ENCODE measurements at regions of chr17 and their contacts with region 1.

Region 1: DNA sequence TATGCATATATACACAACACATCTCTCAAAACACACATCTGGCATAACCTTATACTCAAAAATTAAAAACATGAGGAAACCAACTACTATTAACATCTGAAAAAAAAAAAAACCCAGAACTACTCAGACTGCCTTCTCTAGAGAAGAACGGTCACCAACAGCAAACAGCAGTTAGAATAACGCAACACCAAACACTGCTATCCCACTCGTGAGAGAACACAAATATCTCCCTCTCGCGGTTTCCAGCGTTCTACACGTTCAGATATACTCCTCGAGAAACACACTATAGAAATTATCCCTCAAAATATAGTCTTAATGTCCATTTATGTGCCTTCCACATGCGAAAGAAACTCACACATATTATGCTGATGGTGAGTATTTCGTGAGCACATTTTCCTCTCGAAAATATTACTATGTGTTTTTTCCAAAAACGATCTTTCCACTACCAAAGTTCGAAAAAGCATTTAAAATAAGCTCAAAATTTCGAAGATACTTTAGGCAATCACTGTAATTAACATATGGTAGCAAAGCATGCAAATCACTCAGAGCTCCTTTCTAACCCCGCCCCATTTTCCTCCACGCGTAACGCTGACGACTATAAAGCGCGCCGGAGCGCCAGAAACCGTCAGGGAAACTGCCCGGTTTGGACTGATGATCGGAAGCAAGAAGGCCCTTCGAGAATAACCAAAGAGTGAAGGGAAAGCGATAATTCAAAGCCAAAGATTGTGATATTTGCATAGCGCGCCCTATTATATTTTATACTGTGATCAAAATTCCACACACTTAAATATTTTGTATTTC is 60.1 kb downstream of the TEX14 start:
- DNase-seq: peak; percentile 100
- ATAC-seq: peak; percentile 95
- H3K4me3 ChIP-seq: peak overlapping the region; percentile 64
- H3K27ac ChIP-seq: peak overlapping the region; percentile 78
- H3K4me1 ChIP-seq: peaks cover 13% of the 10 kb centered on the region
- H3K27me3 ChIP-seq: no peaks in the 10 kb centered on the region
- CTCF ChIP-seq: peak; percentile 30; the same call in 1 of the 2 replicates

Region 2: DNA sequence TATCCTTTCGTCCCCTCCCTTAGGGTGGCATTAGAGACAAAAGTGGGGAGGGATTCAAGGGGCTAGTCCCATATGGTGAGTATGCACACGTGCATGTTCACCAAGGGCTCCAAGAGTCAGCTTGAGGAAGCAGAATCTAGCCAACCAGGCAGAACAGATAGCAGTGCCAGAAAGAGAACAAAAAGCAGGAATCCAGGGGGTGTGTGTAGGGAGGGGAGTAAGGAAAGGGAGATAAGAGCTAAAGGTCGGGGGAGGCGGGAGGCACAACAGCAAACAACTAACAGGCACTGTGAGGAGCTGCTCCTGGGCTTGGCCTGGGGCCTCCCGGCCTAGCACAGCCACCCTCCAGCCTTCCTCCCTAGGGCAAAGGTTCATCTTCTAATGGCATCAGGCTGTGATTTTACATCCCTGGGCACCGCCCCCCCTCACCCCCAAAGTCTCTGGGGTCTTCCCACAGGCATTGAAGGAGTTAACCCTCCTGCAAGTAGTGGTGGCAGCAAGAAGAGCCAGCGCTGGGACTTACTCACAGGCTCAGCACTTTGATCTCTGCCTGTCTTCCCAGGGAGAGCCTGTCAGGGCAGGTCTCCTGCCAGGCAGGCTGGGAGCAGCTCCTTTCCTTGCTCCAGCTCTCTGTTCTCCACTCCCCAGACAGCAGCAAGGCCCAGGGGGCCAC is 267.3 kb before region 1 on chr17:
- CTCF ChIA-PET with region 1: no interaction called
- POLR2A ChIA-PET with region 1: no interaction called
- intact Hi-C with region 1: no loop called
- DNase-seq: no peak
- ATAC-seq: no peak
- H3K4me3 ChIP-seq: no peak overlapping the region
- H3K27ac ChIP-seq: no peak overlapping the region
- H3K4me1 ChIP-seq: no peaks in the 10 kb centered on the region
- H3K27me3 ChIP-seq: no peaks in the 10 kb centered on the region
- CTCF ChIP-seq: no peak

Region 3: GRCh38 chr17:58569239-58570177 is 62.2 kb before region 1 on chr17:
- CTCF ChIA-PET with region 1: no interaction called
- POLR2A ChIA-PET with region 1: interaction called, 22 read pairs
- intact Hi-C with region 1: no loop called
- DNase-seq: no peak
- ATAC-seq: no peak
- H3K4me3 ChIP-seq: no peak overlapping the region
- H3K27ac ChIP-seq: no peak overlapping the region
- H3K4me1 ChIP-seq: no peaks in the 10 kb centered on the region
- H3K27me3 ChIP-seq: no peaks in the 10 kb centered on the region
- CTCF ChIP-seq: no peak

Region 4: DNA sequence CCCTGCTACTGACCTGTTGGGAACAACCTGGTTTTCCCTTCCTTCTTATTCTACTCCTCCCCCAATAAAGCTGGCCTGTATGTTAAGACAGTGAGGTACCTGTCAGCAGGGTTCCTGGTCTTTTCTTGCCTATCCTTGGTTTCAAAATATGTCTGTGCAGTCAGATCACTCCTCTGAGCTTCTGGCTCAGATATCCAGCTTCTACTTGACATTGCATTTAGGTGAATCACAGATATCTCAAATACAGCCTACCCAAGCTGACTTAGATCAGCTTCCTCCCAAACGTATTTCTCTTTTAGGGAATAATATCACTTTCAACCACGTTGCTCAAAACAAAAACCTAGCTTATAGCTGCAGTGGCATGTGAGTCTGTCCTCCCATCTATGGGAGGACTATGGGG is 11.4 kb after region 1 on chr17:
- CTCF ChIA-PET with region 1: no interaction called
- POLR2A ChIA-PET with region 1: interaction called, 16 read pairs
- intact Hi-C with region 1: no loop called
- DNase-seq: peak; percentile 67
- ATAC-seq: peak; percentile 81
- H3K4me3 ChIP-seq: no peak overlapping the region
- H3K27ac ChIP-seq: no peak overlapping the region
- H3K4me1 ChIP-seq: peaks cover 10% of the 10 kb centered on the region
- H3K27me3 ChIP-seq: no peaks in the 10 kb centered on the region
- CTCF ChIP-seq: no peak

Region 5: DNA sequence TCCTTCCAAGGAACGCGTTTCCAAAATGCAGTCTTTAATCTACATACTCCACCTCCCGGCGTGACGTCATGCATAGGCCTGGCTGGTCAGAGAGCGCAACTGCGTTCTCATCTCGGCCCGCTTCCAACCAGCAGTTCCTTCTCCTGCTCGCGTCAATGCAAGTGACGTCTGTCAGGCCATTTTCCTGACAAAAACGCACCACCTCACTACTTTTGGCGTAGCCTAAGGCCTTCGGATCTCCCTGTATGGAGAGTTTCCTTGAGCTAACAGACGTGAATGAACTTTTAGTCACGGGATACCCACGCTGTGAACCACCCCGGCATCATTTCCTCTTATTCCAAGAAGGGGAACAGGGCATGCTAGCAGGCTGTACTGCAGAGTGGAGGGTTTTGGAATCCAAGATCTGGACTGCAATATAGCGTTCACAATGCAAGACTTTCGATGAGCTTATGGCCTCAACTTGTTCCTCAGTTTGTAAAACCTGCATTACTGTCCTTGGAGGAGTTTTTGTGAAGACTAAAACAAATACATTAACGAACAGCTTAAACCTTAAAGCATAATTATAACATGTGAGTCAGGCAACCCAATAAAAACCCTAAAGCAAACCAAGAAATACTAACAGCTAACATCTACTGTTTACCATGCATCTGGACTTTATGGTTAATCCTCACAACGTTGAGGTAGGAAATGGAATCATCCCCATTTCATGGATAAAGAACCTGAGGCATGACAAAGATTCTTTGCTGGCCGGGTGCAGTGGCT is 35.3 kb after region 1 on chr17:
- CTCF ChIA-PET with region 1: interaction called, 6 read pairs
- POLR2A ChIA-PET with region 1: interaction called, 18 read pairs
- intact Hi-C with region 1: loop called (anchors 2 kb)
- DNase-seq: peak; percentile 92
- ATAC-seq: peak; percentile 65
- H3K4me3 ChIP-seq: peak overlapping the region; percentile 71
- H3K27ac ChIP-seq: peak overlapping the region; percentile 92
- H3K4me1 ChIP-seq: peaks cover 47% of the 10 kb centered on the region
- H3K27me3 ChIP-seq: no peaks in the 10 kb centered on the region
- CTCF ChIP-seq: no peak

Region 6: DNA sequence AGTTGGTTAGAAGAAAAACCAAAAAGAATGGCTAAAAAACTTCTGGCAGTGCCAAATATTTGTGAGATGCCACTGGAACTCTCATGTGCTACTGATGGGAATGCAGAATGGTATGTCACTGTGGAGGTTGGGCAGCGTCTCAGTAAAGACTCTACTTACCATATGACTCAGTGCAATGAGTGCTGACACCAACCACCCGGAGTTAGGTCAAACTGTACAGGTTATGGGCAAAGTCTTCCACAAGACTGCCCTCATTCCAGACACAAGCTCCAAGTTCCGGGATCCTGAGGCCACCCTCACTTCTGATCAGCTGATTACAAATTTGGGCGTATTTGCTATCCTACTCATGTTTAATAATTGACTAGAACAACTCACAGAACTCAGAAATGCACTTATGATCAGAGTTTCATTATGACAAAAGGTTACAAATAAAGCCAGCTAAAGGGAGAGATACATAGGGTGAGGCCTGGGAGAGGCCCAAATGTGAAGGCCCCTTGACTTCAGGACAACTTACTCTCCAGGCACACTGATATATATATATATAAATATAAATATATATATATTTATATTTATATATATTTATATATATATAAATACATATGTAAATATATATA is 360.1 kb after region 1 on chr17:
- CTCF ChIA-PET with region 1: no interaction called
- POLR2A ChIA-PET with region 1: interaction called, 12 read pairs
- intact Hi-C with region 1: no loop called
- DNase-seq: peak; percentile 14
- ATAC-seq: no peak
- H3K4me3 ChIP-seq: no peak overlapping the region
- H3K27ac ChIP-seq: no peak overlapping the region
- H3K4me1 ChIP-seq: no peaks in the 10 kb centered on the region
- H3K27me3 ChIP-seq: no peaks in the 10 kb centered on the region
- CTCF ChIP-seq: no peak

Region 7: DNA sequence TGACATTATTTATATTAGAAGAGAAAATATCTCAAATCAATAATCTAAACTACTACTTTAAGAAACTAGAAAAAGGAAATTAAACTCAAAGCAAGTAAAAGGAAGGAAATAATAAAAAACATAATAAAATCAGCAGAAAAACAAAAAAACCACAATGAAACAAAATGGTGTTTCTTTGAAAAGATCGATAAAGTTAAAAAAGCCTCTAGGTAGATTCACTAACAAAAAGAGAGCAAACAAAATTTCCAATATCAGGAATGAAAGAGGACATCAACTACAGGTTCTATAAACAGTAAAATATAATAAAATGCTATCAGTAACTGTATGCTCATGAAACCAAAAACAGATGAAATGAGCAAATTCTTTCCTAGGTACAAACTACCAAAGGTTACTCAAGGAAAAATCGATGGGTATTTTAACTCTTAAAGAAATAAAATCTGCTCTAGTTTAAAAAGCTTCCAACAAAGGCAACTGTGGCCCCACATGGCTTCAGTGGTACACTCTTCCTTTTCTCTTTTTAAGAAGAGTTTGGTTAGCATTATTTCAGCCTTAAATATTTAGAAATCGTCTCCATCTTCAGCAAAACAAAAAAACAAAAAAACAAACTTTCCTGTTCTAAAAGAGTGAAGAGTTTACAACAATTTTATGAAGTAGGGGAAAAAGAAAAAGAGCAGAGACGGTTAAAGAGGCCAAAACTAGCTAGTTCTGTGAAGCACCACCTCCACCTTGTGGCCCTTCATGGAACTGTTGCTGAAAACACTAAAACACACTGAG is 372.8 kb after region 1 on chr17:
- CTCF ChIA-PET with region 1: no interaction called
- POLR2A ChIA-PET with region 1: interaction called, 9 read pairs
- intact Hi-C with region 1: loop called (anchors 2 kb)
- DNase-seq: peak; percentile 82
- ATAC-seq: peak; percentile 70
- H3K4me3 ChIP-seq: no peak overlapping the region
- H3K27ac ChIP-seq: no peak overlapping the region
- H3K4me1 ChIP-seq: 0 out of 2 replicates have a peak, but pooled peaks cover 6% of the 10 kb centered on the region
- H3K27me3 ChIP-seq: no peaks in the 10 kb centered on the region
- CTCF ChIP-seq: peak; percentile 98

Region 8: GRCh38 chr17:59513934-59514841 is 882.5 kb after region 1 on chr17:
- CTCF ChIA-PET with region 1: no interaction called
- POLR2A ChIA-PET with region 1: no interaction called
- intact Hi-C with region 1: no loop called
- DNase-seq: peak; percentile 55
- ATAC-seq: no peak
- H3K4me3 ChIP-seq: no peak overlapping the region
- H3K27ac ChIP-seq: no peak overlapping the region
- H3K4me1 ChIP-seq: no peaks in the 10 kb centered on the region
- H3K27me3 ChIP-seq: no peaks in the 10 kb centered on the region
- CTCF ChIP-seq: no peak

Measured in PC-3 (cell line).